ENCODE measurements at regions of chr4 and their contacts with region 1.

Region 1: DNA sequence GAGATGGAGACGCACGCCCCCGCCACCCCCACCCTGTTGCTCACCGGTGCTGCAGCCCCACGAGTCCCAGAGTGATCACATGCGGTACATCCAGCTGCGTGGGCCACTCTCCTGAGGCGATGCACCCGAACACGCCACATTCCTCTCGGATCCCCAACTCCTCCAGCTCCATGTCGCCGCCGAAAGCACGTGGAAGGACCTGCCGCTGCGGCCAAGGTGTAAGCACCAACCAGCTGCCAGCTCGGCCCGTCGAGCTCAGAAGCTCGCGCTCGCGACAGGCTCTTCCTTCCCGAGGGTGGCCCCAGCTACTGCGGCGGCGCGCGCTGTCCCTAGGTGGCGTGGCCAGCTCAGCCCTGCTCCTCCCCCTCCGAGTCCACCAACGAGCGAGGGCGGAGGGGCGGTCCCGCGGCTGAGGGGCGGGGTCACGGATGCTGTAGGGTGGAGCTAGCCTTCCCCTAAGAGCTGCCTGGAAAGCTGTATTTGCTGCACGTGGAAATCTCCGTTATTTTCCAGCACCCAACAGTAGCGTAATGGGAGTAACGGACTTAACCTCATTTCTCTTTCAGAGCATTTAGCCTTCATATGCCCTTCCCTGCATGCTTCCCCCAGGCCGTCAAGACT is at the start of gene PPAT:
- DNase-seq: peak; percentile 98
- ATAC-seq: peak; percentile 86
- H3K4me3 Mint-ChIP-seq: peak within 1 kb of the TSS; percentile 89
- H3K27ac Mint-ChIP-seq: peak within 1 kb of the TSS; percentile 95
- H3K4me1 Mint-ChIP-seq: peaks cover 48% of the 10 kb centered on the region
- H3K27me3 Mint-ChIP-seq: no peaks in the 10 kb centered on the region
- CTCF ChIP-seq: no peak
- total RNA-seq, gene PPAT: 44.1 to 46.9 TPM

Region 2: DNA sequence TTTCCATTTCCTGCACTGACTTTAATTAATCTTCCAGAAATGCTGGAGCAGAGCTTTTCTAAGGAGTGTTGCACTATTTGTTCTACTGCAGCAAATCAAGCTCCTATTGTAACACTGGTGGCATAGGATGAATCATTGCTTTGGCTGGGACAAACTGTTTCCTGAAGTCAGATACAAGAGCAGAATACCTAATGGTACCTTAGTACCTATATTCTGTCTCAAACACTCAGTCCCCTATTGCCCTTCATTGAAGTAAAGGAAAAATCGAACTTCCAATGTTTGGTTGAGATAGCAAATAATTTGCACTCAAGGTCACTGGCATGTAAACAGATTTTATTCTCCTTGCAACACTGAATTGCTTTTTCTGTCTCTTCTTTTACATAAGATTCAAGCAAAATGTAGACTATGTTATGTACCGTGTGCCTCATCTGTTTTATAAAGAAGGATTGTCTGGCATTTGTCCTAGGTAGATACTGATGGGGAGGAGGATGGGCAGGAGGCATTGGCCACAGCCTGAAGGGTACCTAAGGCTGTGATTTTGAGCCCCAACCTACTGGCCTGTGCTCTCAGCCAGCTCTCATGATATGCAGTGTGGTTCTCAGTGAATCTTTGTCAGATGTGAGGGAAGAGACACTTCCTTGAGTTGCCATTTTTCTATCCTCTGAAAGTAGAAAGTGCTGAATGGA is 189.7 kb before region 1 on chr4:
- CTCF ChIA-PET with region 1: no interaction called
- POLR2A ChIA-PET with region 1: no interaction called
- intact Hi-C with region 1: no loop called
- DNase-seq: no peak
- ATAC-seq: no peak
- H3K4me3 Mint-ChIP-seq: no peak overlapping the region
- H3K27ac Mint-ChIP-seq: no peak overlapping the region
- H3K4me1 Mint-ChIP-seq: no peaks in the 10 kb centered on the region
- H3K27me3 Mint-ChIP-seq: peaks cover 9% of the 10 kb centered on the region
- CTCF ChIP-seq: no peak

Region 3: DNA sequence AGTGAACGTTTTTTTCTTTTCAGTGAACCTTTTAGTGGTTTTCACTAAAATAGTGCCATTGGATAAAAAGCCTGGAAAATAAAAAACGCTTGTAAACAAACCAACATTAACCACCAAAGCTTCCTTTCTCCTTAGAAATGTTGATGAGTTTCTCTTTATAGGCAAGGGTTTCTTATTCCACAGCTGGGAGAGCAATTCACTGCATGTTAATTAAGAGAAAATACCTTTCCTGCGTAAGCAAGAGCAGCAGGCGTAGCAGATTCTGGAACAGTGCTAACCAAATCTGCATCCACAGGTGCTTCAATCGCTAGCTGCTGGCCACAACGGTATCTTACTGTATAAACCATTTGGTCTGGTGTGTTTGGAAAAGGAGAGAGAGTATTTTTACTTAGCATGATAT is 34.9 kb before region 1 on chr4:
- CTCF ChIA-PET with region 1: no interaction called
- POLR2A ChIA-PET with region 1: interaction called, 12 read pairs
- intact Hi-C with region 1: no loop called
- DNase-seq: no peak
- ATAC-seq: no peak
- H3K4me3 Mint-ChIP-seq: no peak overlapping the region
- H3K27ac Mint-ChIP-seq: no peak overlapping the region
- H3K4me1 Mint-ChIP-seq: no peaks in the 10 kb centered on the region
- H3K27me3 Mint-ChIP-seq: no peaks in the 10 kb centered on the region
- CTCF ChIP-seq: no peak

Region 4: DNA sequence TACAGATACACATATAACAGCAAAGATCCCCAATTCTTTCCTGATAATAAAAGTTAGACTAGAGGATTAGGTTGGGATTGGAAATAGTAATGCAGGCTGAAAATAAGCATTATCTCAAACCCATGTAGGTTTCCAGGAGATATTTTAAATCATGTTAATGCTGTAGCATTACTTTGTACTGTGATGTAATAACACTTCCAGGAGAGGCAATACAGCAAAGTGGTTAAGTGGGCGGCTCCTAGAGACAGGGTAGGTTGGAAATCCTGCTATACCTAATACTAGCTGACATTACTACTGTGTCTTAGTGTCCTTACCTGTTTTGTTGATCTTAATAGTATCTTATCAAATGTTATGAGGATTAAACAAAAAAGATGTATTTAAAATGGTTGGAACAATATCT is 10.3 kb after region 1 on chr4:
- CTCF ChIA-PET with region 1: no interaction called
- POLR2A ChIA-PET with region 1: interaction called, 22 read pairs
- intact Hi-C with region 1: no loop called
- DNase-seq: peak; percentile 17
- ATAC-seq: no peak
- H3K4me3 Mint-ChIP-seq: no peak overlapping the region
- H3K27ac Mint-ChIP-seq: peak overlapping the region; percentile 64
- H3K4me1 Mint-ChIP-seq: peaks cover 47% of the 10 kb centered on the region
- H3K27me3 Mint-ChIP-seq: no peaks in the 10 kb centered on the region
- CTCF ChIP-seq: no peak

Region 5: GRCh38 chr4:56467284-56468096 is 32.1 kb after region 1 on chr4 and contains the start of gene SRP72:
- CTCF ChIA-PET with region 1: interaction called, 6 read pairs
- POLR2A ChIA-PET with region 1: interaction called, 30 read pairs
- intact Hi-C with region 1: loop called (anchors 2 kb)
- DNase-seq: peak; percentile 93
- ATAC-seq: peak; percentile 93
- H3K4me3 Mint-ChIP-seq: peak within 1 kb of the TSS; percentile 94
- H3K27ac Mint-ChIP-seq: peak within 1 kb of the TSS; percentile 95
- H3K4me1 Mint-ChIP-seq: peaks cover 57% of the 10 kb centered on the region
- H3K27me3 Mint-ChIP-seq: no peaks in the 10 kb centered on the region
- CTCF ChIP-seq: no peak
- total RNA-seq, gene SRP72: 165 to 176 TPM

Region 6: DNA sequence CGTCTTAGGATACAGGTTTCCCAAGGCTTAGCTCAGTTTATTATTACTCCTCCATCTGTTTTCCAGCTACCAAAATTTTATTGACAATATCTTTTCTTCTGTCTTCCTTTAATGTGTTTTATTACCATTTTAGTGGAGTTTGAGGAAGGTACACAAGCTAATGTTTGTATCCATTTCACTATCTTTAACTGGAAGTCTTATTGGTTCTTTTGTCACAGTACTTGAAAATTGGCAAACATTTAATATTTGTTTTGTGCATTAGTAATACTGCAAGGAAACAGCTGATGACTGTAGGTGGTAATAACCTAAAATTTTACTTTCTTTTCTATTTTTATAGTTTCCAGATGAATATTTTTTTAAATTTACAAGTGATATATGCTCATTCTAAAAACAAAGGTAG is 60.8 kb after region 1 on chr4:
- CTCF ChIA-PET with region 1: no interaction called
- POLR2A ChIA-PET with region 1: no interaction called
- intact Hi-C with region 1: no loop called
- DNase-seq: no peak
- ATAC-seq: no peak
- H3K4me3 Mint-ChIP-seq: no peak overlapping the region
- H3K27ac Mint-ChIP-seq: peak overlapping the region; percentile 18
- H3K4me1 Mint-ChIP-seq: no peaks in the 10 kb centered on the region
- H3K27me3 Mint-ChIP-seq: no peaks in the 10 kb centered on the region
- CTCF ChIP-seq: no peak

Region 7: DNA sequence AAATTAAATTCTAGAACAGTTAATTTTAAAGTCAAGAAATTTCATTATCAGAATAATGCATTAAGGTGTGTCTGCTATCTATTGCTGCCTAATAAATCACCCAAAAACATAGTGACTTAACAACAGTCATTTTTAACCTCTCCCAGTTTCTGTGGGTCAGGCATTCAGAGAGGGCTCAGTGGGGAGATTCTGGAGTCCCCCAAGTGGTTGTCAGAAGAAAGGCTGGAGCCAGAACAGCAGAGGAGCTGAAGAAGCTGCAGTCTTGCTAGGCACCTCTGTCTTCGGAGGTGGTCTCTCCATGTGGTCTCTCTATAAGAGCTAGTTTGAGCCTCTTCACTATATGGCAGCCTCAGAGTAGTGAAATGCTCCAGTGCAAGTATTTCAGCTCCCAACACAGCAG is 255.0 kb after region 1 on chr4:
- CTCF ChIA-PET with region 1: no interaction called
- POLR2A ChIA-PET with region 1: no interaction called
- intact Hi-C with region 1: no loop called
- DNase-seq: no peak
- ATAC-seq: no peak
- H3K4me3 Mint-ChIP-seq: no peak overlapping the region
- H3K27ac Mint-ChIP-seq: no peak overlapping the region
- H3K4me1 Mint-ChIP-seq: no peaks in the 10 kb centered on the region
- H3K27me3 Mint-ChIP-seq: peaks cover 4% of the 10 kb centered on the region
- CTCF ChIP-seq: no peak